ENCODE measurements at regions of chr4 and their contacts with region 1.

Region 1: DNA sequence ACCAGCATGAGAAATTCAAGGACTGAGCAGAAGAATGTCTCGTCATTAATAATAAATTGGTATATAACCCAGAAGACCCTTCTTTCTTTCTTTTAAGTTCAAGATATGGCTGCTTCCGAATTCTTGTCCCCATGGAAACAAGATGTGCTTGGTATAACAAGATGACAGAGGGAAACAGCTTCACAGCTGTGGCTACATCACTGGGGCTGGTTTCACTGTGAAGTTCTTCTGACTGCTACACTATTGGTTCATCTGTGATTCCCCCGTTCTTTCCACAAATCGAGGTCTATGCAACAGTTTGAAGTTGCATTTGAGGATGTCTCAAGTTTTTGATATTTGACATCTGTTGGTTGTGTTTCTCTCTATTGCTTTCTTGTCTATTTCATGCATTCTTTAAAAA is 12.3 kb upstream of the DTHD1 start:
- DNase-seq: no peak
- ATAC-seq: peak; percentile 84
- H3K4me3 ChIP-seq: no peak overlapping the region
- H3K27ac ChIP-seq: no peak overlapping the region
- H3K4me1 ChIP-seq: no peaks in the 10 kb centered on the region
- H3K27me3 ChIP-seq: no peaks in the 10 kb centered on the region
- CTCF ChIP-seq: no peak
- EP300 ChIP-seq: no peak
- POLR2A ChIP-seq: no peak
- RAD21 ChIP-seq: no peak

Region 2: DNA sequence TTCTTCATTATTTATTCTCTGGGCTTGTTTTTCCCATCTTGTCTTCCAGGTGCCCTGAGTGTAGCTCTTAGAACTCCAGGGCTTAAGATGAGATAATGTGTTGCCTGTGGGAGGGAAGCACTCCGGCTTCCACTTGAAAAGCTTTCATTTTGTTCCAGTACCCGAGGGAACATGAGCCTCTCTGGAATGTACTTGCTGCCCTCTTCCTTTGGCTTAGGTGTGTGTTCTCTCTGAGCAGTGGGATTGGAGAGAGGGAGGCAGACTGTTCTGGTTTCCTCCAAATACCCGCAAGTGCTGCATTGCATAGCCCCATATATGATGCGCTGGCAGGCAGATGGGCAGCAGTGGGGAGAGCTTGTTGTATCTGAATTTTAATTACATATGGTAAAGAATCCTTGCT is 11.5 kb after region 1 on chr4:
- CTCF ChIA-PET with region 1: interaction called, 6 read pairs
- POLR2A ChIA-PET with region 1: interaction called, 5 read pairs
- RAD21 ChIA-PET with region 1: interaction called, 5 read pairs
- SMC1A ChIA-PET with region 1: interaction called, 18 read pairs
- in situ Hi-C with region 1: no loop called
- intact Hi-C with region 1: no loop called
- DNase-seq: no peak
- ATAC-seq: no peak
- H3K4me3 ChIP-seq: no peak overlapping the region
- H3K27ac ChIP-seq: no peak overlapping the region
- H3K4me1 ChIP-seq: peaks cover 5% of the 10 kb centered on the region
- H3K27me3 ChIP-seq: no peaks in the 10 kb centered on the region
- CTCF ChIP-seq: no peak
- EP300 ChIP-seq: no peak
- POLR2A ChIP-seq: no peak
- RAD21 ChIP-seq: no peak

Region 3: DNA sequence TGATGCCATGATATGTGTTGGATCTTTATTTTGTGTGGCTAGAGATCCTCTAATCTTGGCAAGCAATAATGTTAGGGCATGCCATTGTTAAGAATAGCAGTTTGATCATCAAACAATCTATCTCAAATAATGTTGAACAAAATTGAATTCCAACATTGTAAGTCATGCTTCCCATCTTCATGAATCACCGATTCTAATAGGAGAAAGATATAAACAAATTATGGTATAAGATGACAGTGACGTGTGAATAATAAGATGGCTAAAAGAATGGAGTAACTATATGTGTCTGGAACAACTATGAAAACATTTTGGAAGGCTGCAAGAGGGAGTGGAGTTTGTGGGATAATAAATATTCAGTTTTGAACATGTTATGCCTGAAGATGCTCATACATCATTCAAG is 220.7 kb after region 1 on chr4:
- CTCF ChIA-PET with region 1: no interaction called
- POLR2A ChIA-PET with region 1: no interaction called
- RAD21 ChIA-PET with region 1: no interaction called
- SMC1A ChIA-PET with region 1: no interaction called
- in situ Hi-C with region 1: no loop called
- intact Hi-C with region 1: no loop called
- DNase-seq: no peak
- ATAC-seq: no peak
- H3K4me3 ChIP-seq: no peak overlapping the region
- H3K27ac ChIP-seq: no peak overlapping the region
- H3K4me1 ChIP-seq: no peaks in the 10 kb centered on the region
- H3K27me3 ChIP-seq: no peaks in the 10 kb centered on the region
- CTCF ChIP-seq: no peak
- EP300 ChIP-seq: no peak
- POLR2A ChIP-seq: no peak
- RAD21 ChIP-seq: no peak